ENCODE measurements at regions of chr17 and their contacts with region 1.

Region 1: GRCh38 chr17:59427425-59427921 is 96.0 kb downstream of the YPEL2 start:
- DNase-seq: peak; percentile 61
- H3K4me3 Mint-ChIP-seq: no peak overlapping the region
- H3K27ac Mint-ChIP-seq: peak overlapping the region; percentile 31
- H3K4me1 Mint-ChIP-seq: peaks cover 30% of the 10 kb centered on the region
- H3K27me3 Mint-ChIP-seq: peaks cover 2% of the 10 kb centered on the region

Region 2: GRCh38 chr17:59372138-59372857 is 55.2 kb before region 1 on chr17:
- intact Hi-C with region 1: loop called (anchors 2 kb)
- DNase-seq: no peak
- H3K4me3 Mint-ChIP-seq: peak overlapping the region; percentile 55
- H3K27ac Mint-ChIP-seq: peak overlapping the region; percentile 87
- H3K4me1 Mint-ChIP-seq: peaks cover 62% of the 10 kb centered on the region
- H3K27me3 Mint-ChIP-seq: no peaks in the 10 kb centered on the region